HepG2 (cell line): ENCODE measurements at regions of chr1 and their contacts with region 1.

Region 1: GRCh38 chr1:8259498-8260290 is 58.2 kb upstream of the SLC45A1 start:
- DNase-seq: peak; percentile 89
- ATAC-seq: peak; percentile 69
- H3K4me3 ChIP-seq: peak overlapping the region; percentile 31 to 53 (median 32)
- H3K27ac ChIP-seq: peak overlapping the region; percentile 91
- H3K4me1 ChIP-seq: peaks cover 74% of the 10 kb centered on the region
- H3K27me3 ChIP-seq: no peaks in the 10 kb centered on the region
- CTCF ChIP-seq: no peak
- EP300 ChIP-seq: peak; percentile 24 to 89; a peak in 3 of 4 replicates
- POLR2A ChIP-seq: no peak
- RAD21 ChIP-seq: no peak

Region 2: GRCh38 chr1:8182034-8182761 is 77.5 kb before region 1 on chr1:
- CTCF ChIA-PET with region 1: no interaction called
- POLR2A ChIA-PET with region 1: no interaction called
- in situ Hi-C with region 1: no loop called
- intact Hi-C with region 1: loop called (anchors 2 kb)
- DNase-seq: peak; percentile 85
- ATAC-seq: peak; percentile 75
- H3K4me3 ChIP-seq: no peak overlapping the region; a peak in 1 of 6 replicates
- H3K27ac ChIP-seq: peak overlapping the region; percentile 64
- H3K4me1 ChIP-seq: peaks cover 54% of the 10 kb centered on the region
- H3K27me3 ChIP-seq: no peaks in the 10 kb centered on the region
- CTCF ChIP-seq: no peak
- EP300 ChIP-seq: peak in 1 of 2 experiments; percentile 76; a peak in 1 of 4 replicates
- POLR2A ChIP-seq: no peak
- RAD21 ChIP-seq: 0 out of 2 replicates have a peak, but pooled peaks have one; percentile 21

Region 3: DNA sequence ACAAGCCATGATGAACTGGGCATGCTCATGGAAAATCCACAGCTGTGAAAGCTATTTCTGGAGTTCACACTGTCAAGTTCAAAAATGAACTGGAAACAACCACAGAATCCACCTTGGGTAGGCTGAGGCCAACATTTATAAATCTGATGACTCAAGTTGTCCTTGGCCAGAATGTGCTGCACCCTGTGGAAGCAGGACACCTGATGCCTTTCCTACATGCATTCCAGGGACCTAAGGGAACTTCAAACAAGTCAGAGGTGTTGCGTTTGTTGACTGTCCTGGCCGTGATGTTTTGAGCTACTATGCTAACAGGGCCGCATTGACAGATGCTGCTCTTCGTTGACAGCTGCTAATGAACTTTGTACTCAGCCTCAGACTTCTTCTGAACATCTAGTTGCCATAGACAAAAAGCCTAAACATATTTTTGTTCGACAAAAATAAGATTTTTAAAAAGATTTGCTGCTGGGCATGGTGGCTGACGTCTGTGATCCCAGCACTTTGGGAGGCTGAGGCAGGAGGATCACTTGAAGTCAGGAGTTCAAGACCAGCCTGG is 69.7 kb before region 1 on chr1:
- CTCF ChIA-PET with region 1: no interaction called
- POLR2A ChIA-PET with region 1: interaction called, 10 read pairs
- in situ Hi-C with region 1: no loop called
- intact Hi-C with region 1: loop called (anchors 2 kb)
- DNase-seq: peak; percentile 100
- ATAC-seq: peak; percentile 100
- H3K4me3 ChIP-seq: no peak overlapping the region
- H3K27ac ChIP-seq: peak overlapping the region; percentile 74
- H3K4me1 ChIP-seq: peaks cover 78% of the 10 kb centered on the region
- H3K27me3 ChIP-seq: no peaks in the 10 kb centered on the region
- CTCF ChIP-seq: peak; percentile 8; the same call in 1 of the 2 replicates
- EP300 ChIP-seq: peak; percentile 87 to 97
- POLR2A ChIP-seq: peak in 1 of 2 experiments; percentile 47; a peak in 1 of 4 replicates
- RAD21 ChIP-seq: peak; percentile 65

Region 4: DNA sequence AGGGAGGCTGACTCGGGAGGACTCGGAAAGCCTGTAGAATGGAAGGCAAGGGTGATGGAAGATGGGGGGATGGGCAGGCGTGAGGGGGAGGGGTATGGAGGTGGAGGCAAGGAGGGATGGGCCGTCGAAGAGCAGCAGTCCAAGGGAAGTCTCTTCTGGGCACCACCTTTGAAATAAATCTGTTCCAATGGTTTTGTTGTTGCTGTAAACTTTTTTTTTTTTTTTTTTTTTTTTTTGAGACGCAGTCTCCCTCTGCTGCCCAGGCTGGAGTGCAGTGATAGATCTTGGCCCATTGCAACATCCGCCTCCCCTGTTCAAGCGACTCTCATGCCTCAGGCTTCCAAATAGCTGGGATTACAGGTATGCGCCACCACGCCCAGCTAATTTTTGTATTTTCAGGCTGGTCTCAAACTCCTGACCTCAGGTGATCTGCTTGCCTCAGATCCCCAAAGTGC is 20.8 kb before region 1 on chr1:
- CTCF ChIA-PET with region 1: no interaction called
- POLR2A ChIA-PET with region 1: interaction called, 16 read pairs
- in situ Hi-C with region 1: no loop called
- intact Hi-C with region 1: loop called (anchors 1 kb)
- DNase-seq: peak; percentile 79
- ATAC-seq: peak; percentile 57
- H3K4me3 ChIP-seq: peak overlapping the region in 2 of 3 experiments; percentile 2 to 42; a peak in 3 of 6 replicates
- H3K27ac ChIP-seq: peak overlapping the region; percentile 84
- H3K4me1 ChIP-seq: peaks cover 58% of the 10 kb centered on the region
- H3K27me3 ChIP-seq: no peaks in the 10 kb centered on the region
- CTCF ChIP-seq: peak; percentile 53; the same call in 1 of the 2 replicates
- EP300 ChIP-seq: no peak; a peak in 1 of 4 replicates
- POLR2A ChIP-seq: no peak
- RAD21 ChIP-seq: no peak